ENCODE measurements at regions of chr1 and their contacts with region 1.

Region 1: DNA sequence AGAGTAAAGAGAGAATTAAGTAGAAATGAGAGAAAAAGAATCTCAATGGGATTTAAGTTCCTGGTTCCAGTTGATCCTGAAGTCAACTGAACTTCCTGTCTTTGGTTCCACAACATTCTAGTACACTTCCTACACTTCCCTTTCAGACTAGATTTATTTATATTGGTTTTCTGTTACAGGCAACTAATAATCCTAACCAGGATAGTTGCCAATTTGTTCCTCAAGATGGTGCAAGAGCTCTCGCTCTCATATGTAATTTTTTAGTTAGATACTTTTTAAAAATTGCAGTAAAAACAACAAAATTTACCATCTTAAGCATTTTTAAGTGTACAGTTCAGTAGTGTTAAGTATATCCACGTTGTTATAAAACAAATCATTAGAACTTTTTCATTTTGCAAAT is 28.8 kb upstream of the TRIM45 start:
- DNase-seq: no peak
- ATAC-seq: no peak
- H3K4me3 ChIP-seq: no peak overlapping the region
- H3K4me3 Mint-ChIP-seq: no peak overlapping the region
- H3K27ac ChIP-seq: no peak overlapping the region
- H3K27ac Mint-ChIP-seq: no peak overlapping the region
- H3K4me1 ChIP-seq: no peaks in the 10 kb centered on the region
- H3K4me1 Mint-ChIP-seq: peaks cover 0 to 1% (median 0%) of the 10 kb centered on the region in 7 donors
- H3K27me3 ChIP-seq: no peaks in the 10 kb centered on the region
- H3K27me3 Mint-ChIP-seq: peaks cover 0 to 13% (median 12%) of the 10 kb centered on the region in 5 donors

Region 2: DNA sequence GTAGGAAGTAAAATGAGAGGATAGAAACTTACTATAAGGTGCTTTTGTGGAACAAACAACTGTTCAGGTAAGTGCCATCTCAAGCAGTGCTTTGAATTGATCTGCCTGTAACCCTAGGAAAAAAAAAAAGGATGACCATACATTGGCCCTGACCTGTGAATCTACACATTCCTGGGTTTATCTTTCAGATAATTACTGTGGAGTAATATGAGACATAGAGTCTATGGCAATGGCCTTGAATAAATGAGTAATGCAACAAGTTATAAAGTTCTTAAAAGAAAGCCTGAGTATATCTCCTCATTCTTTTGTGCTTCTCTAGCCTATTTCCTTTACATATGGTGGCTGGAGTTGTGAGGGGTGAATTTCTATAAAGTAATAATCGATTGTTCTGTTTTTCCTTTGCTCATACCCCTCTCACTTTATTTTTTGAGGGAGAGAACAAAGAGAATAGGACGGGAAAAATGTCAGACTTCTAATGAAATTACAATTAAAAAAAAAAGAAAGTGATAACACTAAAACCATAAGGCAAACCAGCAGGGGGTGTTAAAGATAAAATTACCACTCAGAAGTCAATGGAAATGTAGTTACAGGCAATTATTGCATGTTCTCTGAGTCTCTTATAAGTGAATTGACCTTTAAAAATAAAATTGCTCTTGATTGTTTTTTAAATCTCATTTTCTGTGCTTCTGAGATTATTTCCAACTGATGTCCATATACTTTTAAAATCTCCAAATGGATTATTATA is 789.7 kb before region 1 on chr1:
- CTCF ChIA-PET with region 1: no interaction called
- POLR2A ChIA-PET with region 1: no interaction called
- intact Hi-C with region 1: no loop called
- DNase-seq: peak in 3 of 9 donors; percentile 7 to 30 (median 15)
- ATAC-seq: no peak
- H3K4me3 ChIP-seq: no peak overlapping the region
- H3K4me3 Mint-ChIP-seq: no peak overlapping the region
- H3K27ac ChIP-seq: no peak overlapping the region
- H3K27ac Mint-ChIP-seq: peak overlapping the region in 1 of 9 donors; percentile 63
- H3K4me1 ChIP-seq: peaks cover 0 to 13% of the 10 kb centered on the region in 2 donors
- H3K4me1 Mint-ChIP-seq: peaks cover 4 to 55% (median 33%) of the 10 kb centered on the region in 7 donors
- H3K27me3 ChIP-seq: no peaks in the 10 kb centered on the region
- H3K27me3 Mint-ChIP-seq: peaks cover 0 to 24% (median 0%) of the 10 kb centered on the region in 5 donors

Region 3: GRCh38 chr1:116909510-116910378 is 240.6 kb before region 1 on chr1 and contains the start of gene PTGFRN:
- CTCF ChIA-PET with region 1: no interaction called
- POLR2A ChIA-PET with region 1: no interaction called
- intact Hi-C with region 1: no loop called
- DNase-seq: peak in 7 of 9 donors; percentile 5 to 45 (median 22)
- ATAC-seq: peak; percentile 62
- H3K4me3 ChIP-seq: peak within 1 kb of the TSS; percentile 68
- H3K4me3 Mint-ChIP-seq: peak within 1 kb of the TSS in 9 of 10 donors; percentile 72 to 91 (median 84)
- H3K27ac ChIP-seq: peak within 1 kb of the TSS; percentile 52
- H3K27ac Mint-ChIP-seq: peak within 1 kb of the TSS; percentile 18 to 82 (median 64)
- H3K4me1 ChIP-seq: peaks cover 0 to 10% of the 10 kb centered on the region in 2 donors
- H3K4me1 Mint-ChIP-seq: peaks cover 0 to 8% (median 6%) of the 10 kb centered on the region in 7 donors
- H3K27me3 ChIP-seq: no peaks in the 10 kb centered on the region
- H3K27me3 Mint-ChIP-seq: peaks cover 0 to 7% (median 0%) of the 10 kb centered on the region in 5 donors
- total RNA-seq, gene PTGFRN: 1.00 to 5.6 (median 1.5) TPM

Region 4: DNA sequence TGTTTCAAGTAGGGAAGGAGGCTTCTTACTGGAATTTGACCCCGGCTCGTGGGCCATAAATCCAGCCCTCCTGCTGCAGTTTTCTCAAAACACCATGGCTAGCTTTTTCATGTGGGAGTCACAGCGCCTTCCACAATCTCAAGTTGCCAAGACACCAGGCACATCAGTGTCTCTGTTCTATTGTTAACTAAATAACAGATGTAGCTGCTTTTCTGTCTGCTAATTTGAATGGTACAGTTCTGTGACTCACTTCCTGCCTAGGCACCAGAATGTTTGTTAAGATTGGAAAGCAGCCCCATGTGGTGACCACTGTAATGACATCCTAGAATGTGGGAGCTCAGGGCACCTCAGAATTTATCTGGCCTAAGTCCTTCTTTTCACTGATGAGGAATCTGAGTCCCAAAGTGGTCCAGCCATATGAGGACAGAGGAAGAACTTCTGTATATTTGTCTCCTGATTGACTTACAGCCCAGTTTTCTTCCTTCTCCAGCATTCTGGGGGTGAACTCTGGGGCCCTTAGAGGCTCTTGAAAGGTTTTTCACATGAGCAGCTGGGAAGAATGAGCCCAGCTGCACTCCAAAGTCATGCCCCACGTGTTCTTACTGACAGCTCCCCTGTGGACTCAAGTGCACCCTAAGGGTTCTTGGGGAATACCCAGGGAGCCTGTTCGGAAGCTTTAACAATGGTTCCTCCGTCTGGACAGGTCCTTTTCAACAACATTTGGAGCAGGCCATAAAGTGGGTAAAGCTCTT is 56.3 kb before region 1 on chr1:
- CTCF ChIA-PET with region 1: no interaction called
- POLR2A ChIA-PET with region 1: no interaction called
- intact Hi-C with region 1: loop called in 1 of 2 experiments (anchors 10 kb)
- DNase-seq: peak in 7 of 9 donors; percentile 2 to 31 (median 14)
- ATAC-seq: peak; percentile 79
- H3K4me3 ChIP-seq: no peak overlapping the region
- H3K4me3 Mint-ChIP-seq: no peak overlapping the region
- H3K27ac ChIP-seq: no peak overlapping the region
- H3K27ac Mint-ChIP-seq: peak overlapping the region in 3 of 9 donors; percentile 7 to 57 (median 12)
- H3K4me1 ChIP-seq: no peaks in the 10 kb centered on the region
- H3K4me1 Mint-ChIP-seq: peaks cover 0 to 19% (median 2%) of the 10 kb centered on the region in 7 donors
- H3K27me3 ChIP-seq: no peaks in the 10 kb centered on the region
- H3K27me3 Mint-ChIP-seq: no peaks in the 10 kb centered on the region

Region 5: GRCh38 chr1:117346206-117346928 is 196.0 kb after region 1 on chr1:
- CTCF ChIA-PET with region 1: no interaction called
- POLR2A ChIA-PET with region 1: no interaction called
- intact Hi-C with region 1: no loop called
- DNase-seq: no peak
- ATAC-seq: peak; percentile 22
- H3K4me3 ChIP-seq: no peak overlapping the region
- H3K4me3 Mint-ChIP-seq: no peak overlapping the region
- H3K27ac ChIP-seq: no peak overlapping the region
- H3K27ac Mint-ChIP-seq: peak overlapping the region in 1 of 9 donors; percentile 77
- H3K4me1 ChIP-seq: no peaks in the 10 kb centered on the region
- H3K4me1 Mint-ChIP-seq: peaks cover 2 to 17% (median 9%) of the 10 kb centered on the region in 7 donors
- H3K27me3 ChIP-seq: no peaks in the 10 kb centered on the region
- H3K27me3 Mint-ChIP-seq: peaks cover 0 to 12% (median 3%) of the 10 kb centered on the region in 5 donors

Region 6: DNA sequence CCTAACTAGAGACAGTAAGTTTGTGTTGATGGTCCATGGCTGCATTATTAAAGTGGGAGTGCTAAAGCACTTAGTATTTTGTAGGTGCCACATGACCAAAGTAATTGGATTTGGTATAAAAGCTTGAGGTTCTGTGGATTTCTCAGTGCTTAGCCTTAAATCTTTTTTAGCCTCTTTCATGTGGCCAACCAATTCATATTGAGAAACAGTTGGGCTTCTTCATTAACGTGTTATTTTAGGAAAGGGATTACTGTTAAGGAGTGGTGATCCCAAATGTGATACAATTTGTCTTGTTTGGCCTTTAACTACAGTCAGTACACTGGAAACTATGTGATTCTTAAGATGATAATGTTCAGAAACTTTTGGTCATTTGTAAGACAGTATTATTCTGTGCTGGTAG is 242.4 kb after region 1 on chr1:
- CTCF ChIA-PET with region 1: no interaction called
- POLR2A ChIA-PET with region 1: no interaction called
- intact Hi-C with region 1: no loop called
- DNase-seq: no peak
- ATAC-seq: no peak
- H3K4me3 ChIP-seq: no peak overlapping the region
- H3K4me3 Mint-ChIP-seq: no peak overlapping the region
- H3K27ac ChIP-seq: no peak overlapping the region
- H3K27ac Mint-ChIP-seq: no peak overlapping the region
- H3K4me1 ChIP-seq: peaks cover 6 to 11% of the 10 kb centered on the region in 2 donors
- H3K4me1 Mint-ChIP-seq: peaks cover 11 to 88% (median 76%) of the 10 kb centered on the region in 7 donors
- H3K27me3 ChIP-seq: no peaks in the 10 kb centered on the region
- H3K27me3 Mint-ChIP-seq: no peaks in the 10 kb centered on the region

Measured in naive thymus-derived CD4-positive, alpha-beta T cell (primary cell).